ENCODE measurements at regions of chr6 and their contacts with region 1.

Region 1: DNA sequence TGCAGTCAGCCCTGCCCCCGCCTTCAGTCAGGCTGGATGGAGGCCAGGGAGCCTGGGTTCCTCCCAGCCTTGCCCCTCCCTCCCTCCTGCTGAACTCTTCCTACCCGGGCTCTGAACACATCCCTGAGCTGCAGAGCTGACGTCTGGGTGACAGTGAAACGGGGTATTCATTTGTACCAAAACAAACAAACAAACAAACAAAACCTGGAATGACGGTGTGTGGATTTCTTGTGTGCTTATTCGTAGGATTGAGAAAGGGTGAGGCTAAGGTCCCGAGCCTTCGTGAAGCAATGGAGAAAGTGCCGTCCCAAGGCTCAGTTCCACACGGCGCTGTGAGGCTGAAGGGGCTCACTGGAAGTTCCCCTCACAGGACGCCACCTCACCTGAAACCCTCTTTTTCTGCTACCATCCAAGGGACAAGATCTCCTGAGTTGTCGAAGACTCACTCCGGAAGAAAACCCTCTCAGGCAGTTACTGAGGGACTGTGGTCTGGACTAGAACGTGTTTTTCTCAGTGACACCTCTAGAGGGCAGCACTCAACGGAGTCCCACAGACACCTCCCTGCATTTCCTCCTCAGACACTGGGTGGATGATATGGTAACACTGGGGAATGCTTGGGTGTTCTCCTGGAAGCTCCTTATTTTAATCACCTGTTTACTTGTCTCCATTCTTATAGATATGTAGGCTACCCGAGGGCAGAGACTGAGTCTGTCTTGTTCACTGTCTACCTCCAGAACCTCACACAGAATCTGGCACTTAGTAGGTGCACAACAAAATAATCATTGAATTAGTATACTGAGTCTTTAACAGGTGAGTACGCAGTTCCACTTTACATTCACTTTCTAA is 27.3 kb downstream of the GSTA3 start:
- DNase-seq: no peak
- H3K4me3 ChIP-seq: peak overlapping the region; percentile 61
- CTCF ChIP-seq: peak; percentile 79

Region 2: GRCh38 chr6:52759085-52759484 is 123.1 kb before region 1 on chr6:
- CTCF ChIA-PET with region 1: no interaction called
- POLR2A ChIA-PET with region 1: no interaction called
- DNase-seq: no peak
- H3K4me3 ChIP-seq: no peak overlapping the region
- CTCF ChIP-seq: no peak

Region 3: DNA sequence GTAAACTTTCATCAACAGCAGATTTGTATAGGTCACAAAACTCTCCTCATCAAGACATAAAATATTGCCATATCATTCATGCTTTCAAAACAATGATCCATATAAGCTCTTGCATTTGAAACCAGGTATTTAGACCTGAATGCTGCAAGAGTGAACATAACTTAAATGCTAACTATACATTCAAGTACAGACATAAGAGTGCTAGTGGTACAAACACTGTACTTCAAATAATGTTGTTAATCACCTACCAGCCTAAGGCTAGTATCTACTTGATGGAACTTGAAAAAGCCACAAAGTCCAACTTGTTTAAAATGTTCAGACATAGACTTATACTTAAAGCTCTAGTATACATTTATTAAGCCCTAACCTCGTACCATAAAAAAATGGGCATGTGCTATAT is 103.0 kb before region 1 on chr6:
- CTCF ChIA-PET with region 1: no interaction called
- POLR2A ChIA-PET with region 1: no interaction called
- DNase-seq: no peak
- H3K4me3 ChIP-seq: no peak overlapping the region
- CTCF ChIP-seq: no peak

Region 4: GRCh38 chr6:52872031-52872430 is 10.2 kb before region 1 on chr6:
- CTCF ChIA-PET with region 1: interaction called, 10 read pairs
- POLR2A ChIA-PET with region 1: no interaction called
- DNase-seq: no peak
- H3K4me3 ChIP-seq: no peak overlapping the region
- CTCF ChIP-seq: no peak

Region 5: GRCh38 chr6:52893803-52894649 is 11.8 kb after region 1 on chr6:
- CTCF ChIA-PET with region 1: interaction called, 14 read pairs
- POLR2A ChIA-PET with region 1: no interaction called
- DNase-seq: no peak
- H3K4me3 ChIP-seq: no peak overlapping the region
- CTCF ChIP-seq: no peak

Region 6: DNA sequence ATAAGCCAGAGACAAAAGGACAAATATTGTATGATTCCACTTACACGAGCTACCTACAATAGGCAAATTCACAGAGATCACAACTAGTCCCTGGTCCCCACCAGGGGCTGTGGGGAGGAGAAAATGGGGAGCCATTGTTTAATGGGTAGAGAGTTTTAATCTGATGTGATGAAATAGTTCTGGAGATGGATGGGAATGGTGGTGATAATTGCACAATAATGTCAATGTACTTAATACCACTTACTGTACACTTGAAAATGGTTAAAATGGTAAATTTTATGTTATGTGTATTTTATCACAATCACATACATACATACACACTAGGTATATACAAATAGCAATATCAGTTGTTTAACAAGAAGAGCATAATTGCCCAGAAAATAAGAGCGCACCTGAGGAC is 51.6 kb after region 1 on chr6:
- CTCF ChIA-PET with region 1: no interaction called
- POLR2A ChIA-PET with region 1: no interaction called
- DNase-seq: no peak
- H3K4me3 ChIP-seq: no peak overlapping the region
- CTCF ChIP-seq: no peak

Region 7: GRCh38 chr6:53906842-53907241 is 1024.6 kb after region 1 on chr6:
- CTCF ChIA-PET with region 1: no interaction called
- POLR2A ChIA-PET with region 1: no interaction called
- DNase-seq: no peak
- H3K4me3 ChIP-seq: no peak overlapping the region
- CTCF ChIP-seq: no peak

Measured in AG04449 (cell line).